ENCODE measurements at regions of chr2 and their contacts with region 1.

Region 1: DNA sequence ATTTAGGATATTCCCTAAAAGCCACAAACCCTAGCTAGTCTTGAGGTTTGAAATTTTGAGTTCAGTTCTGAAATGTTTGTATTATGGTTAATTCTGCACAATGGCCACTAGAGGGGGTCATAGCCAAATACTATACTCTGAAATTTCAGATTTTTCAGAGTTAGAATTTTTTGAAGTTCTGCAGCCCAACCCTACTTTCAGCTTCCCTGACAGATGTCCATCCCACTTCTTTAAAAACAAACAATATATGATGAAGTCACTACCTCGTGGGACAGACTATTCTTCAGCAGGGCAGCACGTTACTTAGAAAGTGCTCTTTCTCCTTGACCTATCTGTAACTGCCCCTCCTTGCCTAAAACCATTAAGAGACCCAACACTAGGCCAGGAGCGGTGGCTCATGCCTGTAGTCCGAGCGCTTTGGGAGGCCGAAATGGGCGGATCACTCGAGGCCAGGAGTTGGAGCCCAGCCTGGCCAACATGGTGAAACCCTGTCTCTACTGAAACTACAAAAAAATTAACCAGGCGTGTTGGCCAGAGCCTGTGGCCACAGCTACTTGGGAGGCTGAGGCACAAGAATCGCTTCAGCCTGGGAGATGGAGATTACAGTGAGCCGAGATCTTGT is 48.2 kb upstream of the PAPOLG start:
- DNase-seq: no peak
- ATAC-seq: peak in 5 of 8 donors; percentile 25 to 66 (median 40)
- H3K4me3 ChIP-seq: no peak overlapping the region
- H3K27ac ChIP-seq: no peak overlapping the region
- H3K4me1 ChIP-seq: peaks cover 0 to 16% (median 0%) of the 10 kb centered on the region in 9 donors
- H3K27me3 ChIP-seq: peaks cover 0 to 2% (median 0%) of the 10 kb centered on the region in 7 donors
- CTCF ChIP-seq: peak; percentile 65 to 82 (median 73)

Region 2: DNA sequence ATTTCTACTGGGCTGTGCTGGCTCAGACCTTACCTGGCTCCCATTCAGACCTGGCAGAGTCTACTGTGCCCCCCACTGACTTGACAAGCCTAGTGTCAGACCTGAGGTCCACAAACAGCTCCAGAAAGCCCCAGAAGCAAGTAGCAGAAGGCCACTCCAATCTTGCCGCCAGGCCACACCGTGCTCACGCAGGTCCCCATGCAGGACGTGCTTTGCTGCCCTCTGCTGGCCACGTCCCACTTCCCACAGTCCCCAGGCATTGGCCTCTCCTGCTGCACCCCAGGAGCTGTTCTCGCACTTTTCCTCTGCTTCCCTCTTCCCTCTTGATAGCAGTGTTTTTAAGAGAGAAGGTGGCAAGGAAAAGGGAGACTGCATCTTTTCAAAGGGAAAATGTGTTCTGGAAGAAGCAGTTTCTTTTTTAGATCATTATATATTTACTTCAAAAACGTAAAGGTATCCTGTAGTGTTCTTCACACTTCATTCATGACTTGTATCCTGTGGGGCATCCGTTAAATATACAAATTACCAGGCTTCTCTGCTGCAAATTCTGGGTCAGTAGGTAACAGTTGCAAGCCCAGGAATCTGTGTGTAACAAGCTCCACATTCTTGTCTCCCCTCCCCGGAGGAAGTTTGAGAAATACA is 33.2 kb before region 1 on chr2:
- intact Hi-C with region 1: no loop called
- DNase-seq: peak; percentile 82 to 87
- ATAC-seq: peak; percentile 81 to 95 (median 94)
- H3K4me3 ChIP-seq: no peak overlapping the region
- H3K27ac ChIP-seq: no peak overlapping the region
- H3K4me1 ChIP-seq: peaks cover 0 to 6% (median 0%) of the 10 kb centered on the region in 9 donors
- H3K27me3 ChIP-seq: peaks cover 0 to 39% (median 4%) of the 10 kb centered on the region in 7 donors
- CTCF ChIP-seq: peak; percentile 78 to 94 (median 91)

Region 3: DNA sequence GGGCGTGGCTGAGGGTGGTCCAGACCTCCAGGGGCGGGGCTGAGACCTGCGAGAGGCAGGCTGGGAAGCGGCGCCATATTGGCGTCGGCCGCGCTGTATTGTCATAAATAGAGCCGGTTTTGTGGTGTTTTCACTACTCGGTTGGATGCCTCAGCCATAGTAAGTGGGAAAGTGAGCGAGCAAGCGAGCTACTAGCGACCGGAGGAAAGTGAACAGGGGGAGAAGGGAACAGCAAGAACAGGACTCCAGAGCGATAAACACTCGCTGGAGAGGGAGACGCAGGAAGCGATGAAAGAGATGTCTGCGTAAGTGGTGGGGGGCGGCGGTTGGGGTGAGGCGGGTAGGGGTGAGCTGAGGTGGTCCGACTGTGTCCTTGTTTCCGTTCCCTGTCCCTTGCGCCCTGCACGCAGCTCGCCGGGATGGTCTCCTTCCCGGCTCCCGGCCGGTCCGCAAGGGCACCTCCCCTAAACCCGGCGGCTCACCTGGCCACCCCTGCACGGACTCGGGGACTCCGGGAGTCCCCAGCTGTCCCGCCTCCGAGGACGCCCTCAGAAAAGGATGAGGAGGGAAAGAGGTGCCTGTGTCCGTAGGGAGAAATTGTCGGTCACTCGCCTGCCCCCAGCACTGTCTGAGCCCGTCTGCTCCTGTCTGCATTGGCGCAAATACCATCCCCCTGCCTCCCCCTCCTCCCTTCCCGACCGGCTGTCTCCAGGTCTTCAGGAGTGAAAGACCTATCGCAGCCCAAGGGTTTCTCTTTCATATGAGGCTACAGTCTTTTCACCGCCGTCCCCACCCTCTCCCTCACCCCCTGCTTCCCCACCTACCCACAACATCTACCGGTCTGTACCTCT is 48.6 kb after region 1 on chr2 and contains the start of gene PAPOLG:
- intact Hi-C with region 1: loop called in 1 of 10 experiments (anchors 2 kb)
- DNase-seq: peak; percentile 96 to 97
- ATAC-seq: peak; percentile 99 to 100 (median 100)
- H3K4me3 ChIP-seq: peak within 1 kb of the TSS; percentile 75 to 93 (median 90)
- H3K27ac ChIP-seq: peak within 1 kb of the TSS; percentile 40 to 95 (median 86)
- H3K4me1 ChIP-seq: peaks cover 0 to 28% (median 18%) of the 10 kb centered on the region in 9 donors
- H3K27me3 ChIP-seq: no peaks in the 10 kb centered on the region
- CTCF ChIP-seq: no peak
- total RNA-seq, gene PAPOLG: 6.4 to 11.9 (median 8.8) TPM

Measured in heart right ventricle (tissue), 16 donors.